K562 (cell line): ENCODE measurements at regions of chr19 and their contacts with region 1.

Region 1: DNA sequence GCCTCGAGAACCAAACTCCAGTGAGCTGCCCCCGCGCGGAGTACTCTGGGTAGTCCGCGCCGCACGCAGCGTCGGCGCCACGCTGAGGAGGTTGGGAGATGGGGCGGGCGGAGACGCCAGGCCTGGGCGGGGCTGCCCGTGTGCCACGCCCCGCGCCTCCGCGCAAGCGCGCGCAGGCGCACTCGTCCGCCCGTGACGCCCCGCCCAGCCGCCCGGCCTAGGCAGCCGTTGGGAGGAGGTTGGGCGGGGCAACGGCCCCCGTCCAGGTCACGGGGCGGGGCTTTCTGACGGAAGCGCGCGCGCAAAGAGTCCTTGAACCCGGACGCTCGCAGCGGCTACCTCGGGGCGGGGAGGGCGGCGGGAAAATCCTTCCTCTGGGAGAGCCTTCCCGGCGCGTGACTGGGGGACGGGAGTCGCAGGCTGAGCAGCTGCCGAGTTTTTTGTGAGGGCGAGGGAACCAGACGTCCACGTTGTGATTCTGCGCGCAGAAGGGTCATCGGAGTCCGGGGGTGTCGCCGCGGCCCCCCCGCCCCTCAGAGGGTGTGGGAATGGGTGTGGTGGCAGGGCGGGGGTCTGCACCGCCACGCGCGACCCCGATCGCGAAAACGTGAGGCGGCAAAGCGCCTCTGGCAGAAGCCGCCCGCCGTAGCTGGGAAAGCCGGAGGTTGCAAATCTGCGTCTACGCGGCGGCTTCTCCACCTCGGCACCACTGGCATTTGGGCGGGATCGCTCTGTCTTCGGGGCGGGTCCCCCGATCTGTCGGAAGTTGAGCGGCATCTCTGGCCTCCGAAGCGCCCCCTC is at the start of gene MED26:
- DNase-seq: peak; percentile 96 to 99 (median 98)
- ATAC-seq: peak; percentile 95
- H3K4me3 ChIP-seq: peak within 1 kb of the TSS; percentile 99
- H3K27ac ChIP-seq: peak within 1 kb of the TSS; percentile 93
- H3K4me1 ChIP-seq: peaks cover 13 to 28% of the 10 kb centered on the region in 2 experiments; a peak in 4 of 5 replicates
- H3K27me3 ChIP-seq: no peaks in the 10 kb centered on the region
- CTCF ChIP-seq: peak in 1 of 3 experiments; percentile 27; a peak in 2 of 6 replicates
- EP300 ChIP-seq: peak; percentile 26; the same call in 1 of the 2 replicates
- POLR2A ChIP-seq: peak; percentile 90
- RAD21 ChIP-seq: no peak
- polyA plus RNA-seq, gene MED26: 0.71 to 0.86 TPM

Region 2: GRCh38 chr19:16542045-16542909 is 86.1 kb before region 1 on chr19 and contains the start of gene CHERP:
- CTCF ChIA-PET with region 1: no interaction called
- POLR2A ChIA-PET with region 1: interaction called, 4 read pairs
- in situ Hi-C with region 1: no loop called
- intact Hi-C with region 1: loop called (anchors 10 kb)
- DNase-seq: peak; percentile 94 to 97 (median 94)
- ATAC-seq: peak; percentile 93
- H3K4me3 ChIP-seq: peak within 1 kb of the TSS; percentile 91
- H3K27ac ChIP-seq: peak within 1 kb of the TSS; percentile 79
- H3K4me1 ChIP-seq: peaks cover 5 to 10% of the 10 kb centered on the region in 2 experiments; a peak in 4 of 5 replicates
- H3K27me3 ChIP-seq: no peaks in the 10 kb centered on the region; a peak in 1 of 5 replicates
- CTCF ChIP-seq: no peak
- EP300 ChIP-seq: no peak
- POLR2A ChIP-seq: peak; percentile 90
- RAD21 ChIP-seq: peak in 1 of 2 experiments; percentile 13; a peak in 1 of 4 replicates
- polyA plus RNA-seq, gene CHERP: 0.60 to 0.75 TPM

Region 3: GRCh38 chr19:16587833-16588823 is 40.3 kb before region 1 on chr19:
- CTCF ChIA-PET with region 1: no interaction called
- POLR2A ChIA-PET with region 1: interaction called, 8 read pairs
- in situ Hi-C with region 1: no loop called
- intact Hi-C with region 1: loop called (anchors 2 kb)
- DNase-seq: peak; percentile 54 to 85 (median 68)
- ATAC-seq: peak; percentile 82
- H3K4me3 ChIP-seq: peak overlapping the region; percentile 7; the same call in 1 of the 2 replicates
- H3K27ac ChIP-seq: peak overlapping the region; percentile 61
- H3K4me1 ChIP-seq: peaks cover 57 to 75% of the 10 kb centered on the region in 2 experiments
- H3K27me3 ChIP-seq: no peaks in the 10 kb centered on the region
- CTCF ChIP-seq: peak in 2 of 3 experiments; percentile 25 to 37; a peak in 3 of 6 replicates
- EP300 ChIP-seq: no peak
- POLR2A ChIP-seq: no peak
- RAD21 ChIP-seq: peak in 1 of 2 experiments; percentile 51; a peak in 2 of 4 replicates

Region 4: DNA sequence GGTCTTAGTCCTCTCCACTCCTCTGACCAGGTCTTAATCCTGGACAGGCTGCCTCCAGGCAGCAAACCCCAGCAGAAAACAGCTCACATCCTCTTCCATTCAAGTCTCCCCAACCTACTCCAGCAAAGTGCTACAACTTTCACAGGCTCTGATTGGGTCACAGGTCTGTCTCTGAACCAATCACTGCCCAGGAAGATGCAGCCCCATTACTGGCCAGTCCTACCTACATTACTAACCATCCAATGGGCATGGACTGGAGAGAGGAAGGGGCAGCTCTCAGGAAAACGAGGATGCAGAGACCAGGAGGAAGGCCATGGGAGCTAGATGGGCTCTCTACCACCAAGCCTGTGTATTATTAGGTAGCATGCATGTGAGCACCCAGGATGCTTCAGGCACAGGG is 12.6 kb before region 1 on chr19:
- CTCF ChIA-PET with region 1: no interaction called
- POLR2A ChIA-PET with region 1: interaction called, 52 read pairs
- in situ Hi-C with region 1: no loop called
- intact Hi-C with region 1: no loop called
- DNase-seq: peak in 3 of 4 experiments; percentile 52 to 72 (median 59)
- ATAC-seq: peak; percentile 61
- H3K4me3 ChIP-seq: no peak overlapping the region
- H3K27ac ChIP-seq: no peak overlapping the region
- H3K4me1 ChIP-seq: peaks cover 14 to 15% of the 10 kb centered on the region in 2 experiments; a peak in 4 of 5 replicates
- H3K27me3 ChIP-seq: no peaks in the 10 kb centered on the region
- CTCF ChIP-seq: no peak
- EP300 ChIP-seq: no peak
- POLR2A ChIP-seq: no peak
- RAD21 ChIP-seq: no peak